Activated CD8-positive, alpha-beta T cell treated with anti-CD3 and anti-CD28 coated beads, Interleukin-2, amount 10 ng/mL, durations not matched to agents 7 days and 5 days (primary cell): ENCODE measurements at regions of chr10 and their contacts with region 1.

Region 1: GRCh38 chr10:87861953-87862678 is 1.2 kb downstream of the KLLN start:
- DNase-seq: peak; percentile 96
- ATAC-seq: peak; percentile 62
- H3K4me3 Mint-ChIP-seq: peak overlapping the region; percentile 98
- H3K27ac Mint-ChIP-seq: peak overlapping the region; percentile 94
- H3K4me1 Mint-ChIP-seq: peaks cover 28% of the 10 kb centered on the region
- H3K27me3 Mint-ChIP-seq: peaks cover 3% of the 10 kb centered on the region

Region 2: DNA sequence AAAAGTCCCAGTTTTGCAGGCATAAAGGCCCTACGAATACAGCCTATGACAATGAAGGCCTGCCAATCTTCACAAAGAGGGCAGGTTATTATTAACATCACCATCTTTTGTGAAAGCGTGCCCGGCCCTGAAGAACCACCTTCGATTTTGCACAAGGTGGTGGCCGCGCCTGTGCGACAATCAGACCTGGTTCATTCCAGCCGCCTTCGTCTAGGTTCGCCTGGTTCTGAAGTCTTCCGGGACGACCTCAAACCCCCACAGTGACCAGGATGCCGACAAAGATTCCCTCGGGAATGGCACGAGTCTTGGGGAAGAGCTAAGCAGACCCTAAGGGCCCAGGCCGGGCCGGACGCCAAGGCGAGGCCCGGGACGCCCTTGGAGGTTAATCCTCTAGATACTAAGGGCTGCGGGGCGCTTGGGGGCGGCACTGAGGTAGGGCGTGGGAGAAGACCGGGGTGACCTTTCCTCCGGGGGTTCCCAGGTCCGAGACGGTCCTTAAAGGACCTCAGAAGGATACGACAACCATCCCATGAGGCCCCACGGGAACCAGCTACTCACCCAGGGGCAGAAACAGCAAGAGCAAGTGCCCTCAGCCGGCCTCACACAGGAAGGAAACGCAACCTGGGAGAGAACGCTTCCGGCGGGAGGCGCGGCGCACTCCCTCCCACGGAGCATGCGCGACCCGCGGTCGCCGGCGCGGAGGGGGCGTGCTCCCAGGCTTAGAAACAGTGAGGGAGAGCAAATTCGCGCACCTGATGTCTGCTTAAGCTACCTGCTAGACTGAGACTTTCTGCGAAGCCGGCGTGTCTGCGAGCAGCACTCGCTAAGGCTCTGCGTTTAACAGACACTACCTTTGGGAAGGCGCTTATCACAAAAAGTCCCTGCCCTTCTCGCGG is 44.3 kb before region 1 on chr10 and contains the start of gene ATAD1:
- CTCF ChIA-PET with region 1: interaction called, 17 read pairs
- POLR2A ChIA-PET with region 1: interaction called, 22 read pairs
- DNase-seq: peak; percentile 92
- ATAC-seq: peak; percentile 94
- H3K4me3 Mint-ChIP-seq: peak within 1 kb of the TSS; percentile 99
- H3K27ac Mint-ChIP-seq: peak within 1 kb of the TSS; percentile 97
- H3K4me1 Mint-ChIP-seq: peaks cover 34% of the 10 kb centered on the region
- H3K27me3 Mint-ChIP-seq: peaks cover 2% of the 10 kb centered on the region
- total RNA-seq, gene ATAD1: 38.9 to 42.5 TPM

Region 3: GRCh38 chr10:87872828-87873227 is 10.7 kb after region 1 on chr10:
- CTCF ChIA-PET with region 1: interaction called, 5 read pairs
- POLR2A ChIA-PET with region 1: interaction called, 14 read pairs
- DNase-seq: no peak
- ATAC-seq: no peak
- H3K4me3 Mint-ChIP-seq: no peak overlapping the region
- H3K27ac Mint-ChIP-seq: no peak overlapping the region
- H3K4me1 Mint-ChIP-seq: peaks cover 44% of the 10 kb centered on the region
- H3K27me3 Mint-ChIP-seq: no peaks in the 10 kb centered on the region

Region 4: GRCh38 chr10:88386821-88387773 is 525.0 kb after region 1 on chr10:
- CTCF ChIA-PET with region 1: interaction called, 82 read pairs
- POLR2A ChIA-PET with region 1: interaction called, 40 read pairs
- DNase-seq: no peak
- ATAC-seq: no peak
- H3K4me3 Mint-ChIP-seq: no peak overlapping the region
- H3K27ac Mint-ChIP-seq: no peak overlapping the region
- H3K4me1 Mint-ChIP-seq: peaks cover 19% of the 10 kb centered on the region
- H3K27me3 Mint-ChIP-seq: no peaks in the 10 kb centered on the region

Region 5: GRCh38 chr10:88553116-88553752 is 691.1 kb after region 1 on chr10:
- CTCF ChIA-PET with region 1: interaction called, 10 read pairs
- POLR2A ChIA-PET with region 1: no interaction called
- DNase-seq: peak; percentile 64
- ATAC-seq: peak; percentile 79
- H3K4me3 Mint-ChIP-seq: no peak overlapping the region
- H3K27ac Mint-ChIP-seq: no peak overlapping the region
- H3K4me1 Mint-ChIP-seq: no peaks in the 10 kb centered on the region
- H3K27me3 Mint-ChIP-seq: no peaks in the 10 kb centered on the region